ENCODE measurements at regions of chr9 and their contacts with region 1.

Region 1: DNA sequence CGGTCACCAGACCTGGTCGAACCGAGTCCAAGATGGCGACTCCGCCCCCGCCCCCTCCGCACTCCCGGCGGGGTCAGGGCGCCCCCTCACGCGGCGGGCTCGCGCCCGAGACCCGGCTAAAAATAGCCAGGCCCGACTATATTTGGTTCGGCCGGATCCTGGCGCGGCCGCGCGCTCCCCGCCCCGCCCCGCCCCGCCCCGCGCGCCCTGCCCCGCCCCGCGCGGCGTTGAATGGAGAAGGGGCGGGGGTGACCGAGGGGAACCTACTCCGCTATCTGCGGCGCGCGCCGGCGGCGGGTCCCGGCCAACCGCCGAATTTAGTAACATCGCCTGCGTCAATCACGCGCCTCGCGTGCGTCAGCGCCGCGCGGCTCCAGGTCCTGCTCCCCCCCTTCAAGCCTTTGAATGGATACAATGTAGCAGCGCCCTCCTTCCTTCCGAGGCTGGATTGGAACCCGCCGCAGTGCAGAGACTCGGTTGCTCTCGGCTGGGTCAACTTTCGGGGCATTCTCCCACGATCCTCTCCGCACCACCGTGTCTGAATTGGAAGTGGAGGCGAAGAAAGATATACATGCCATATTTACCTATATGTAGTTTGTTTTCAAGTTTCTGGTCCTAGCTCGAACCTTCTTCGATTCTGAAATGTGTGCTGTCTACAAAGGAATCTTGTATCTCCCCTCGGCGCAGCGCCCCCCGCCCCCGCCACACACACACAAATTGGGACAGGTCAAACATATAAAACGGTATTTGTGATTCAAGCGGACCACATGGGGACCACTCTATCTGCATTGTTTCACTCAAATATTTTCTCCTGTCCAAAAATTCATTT is 1.6 kb upstream of the NR4A3 start:
- DNase-seq: peak; percentile 48
- ATAC-seq: peak; percentile 49
- H3K4me3 ChIP-seq: peak overlapping the region; percentile 91
- H3K27ac ChIP-seq: peak overlapping the region; percentile 92
- H3K4me1 ChIP-seq: peaks cover 17% of the 10 kb centered on the region
- H3K27me3 ChIP-seq: peaks cover 0 to 4% of the 10 kb centered on the region in 2 experiments; a peak in 2 of 4 replicates
- CTCF ChIP-seq: peak in 1 of 3 experiments; percentile 30; a peak in 2 of 6 replicates
- EP300 ChIP-seq: peak; percentile 80; a peak in 3 of 4 replicates
- POLR2A ChIP-seq: no peak; the same call in none of the 2 replicates
- RAD21 ChIP-seq: no peak

Region 2: DNA sequence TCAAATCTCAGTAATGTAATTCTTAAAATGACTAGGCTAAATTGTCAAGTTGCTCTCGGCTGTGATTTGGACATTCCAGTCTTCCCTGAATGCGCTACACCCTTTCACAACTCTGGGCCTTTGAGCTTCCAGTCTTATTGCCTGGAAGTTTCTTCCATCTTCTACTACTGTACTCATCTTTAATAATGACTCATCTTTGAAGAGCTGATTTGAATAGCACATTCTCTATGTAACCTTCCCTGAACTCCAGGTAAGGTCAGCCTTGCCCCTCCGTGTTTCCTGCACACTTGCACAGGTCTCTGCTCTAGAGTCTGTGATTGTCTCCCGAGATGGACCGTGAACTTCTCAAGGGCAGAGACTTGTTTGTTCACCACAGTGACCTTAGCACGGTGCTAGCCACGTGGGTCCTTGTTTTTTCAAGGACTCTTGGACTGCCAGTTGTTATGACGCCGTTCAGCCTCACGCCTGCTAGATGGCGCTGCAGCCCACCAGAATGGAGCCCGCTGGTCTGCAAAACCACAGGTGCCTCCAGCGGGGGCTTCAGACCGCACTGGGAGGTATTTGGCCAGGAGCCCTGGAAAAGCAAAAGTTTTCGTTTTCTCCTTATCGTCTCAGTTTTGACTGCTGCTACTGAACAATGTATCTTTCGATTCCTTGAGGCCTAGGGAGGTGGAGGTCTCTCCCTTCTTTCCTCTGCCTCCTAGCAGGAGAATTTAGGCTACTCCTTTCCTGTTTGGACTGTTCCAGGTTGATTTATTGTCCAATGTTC is 553.6 kb before region 1 on chr9:
- CTCF ChIA-PET with region 1: interaction called, 4 read pairs
- POLR2A ChIA-PET with region 1: no interaction called
- RAD21 ChIA-PET with region 1: interaction called, 4 read pairs
- SMC1A ChIA-PET with region 1: interaction called, 11 read pairs
- in situ Hi-C with region 1: no loop called
- intact Hi-C with region 1: loop called (anchors 5 kb)
- DNase-seq: peak; percentile 48
- ATAC-seq: peak; percentile 82
- H3K4me3 ChIP-seq: no peak overlapping the region
- H3K27ac ChIP-seq: peak overlapping the region; percentile 57; the same call in 1 of the 2 replicates
- H3K4me1 ChIP-seq: peaks cover 40% of the 10 kb centered on the region
- H3K27me3 ChIP-seq: no peaks in the 10 kb centered on the region
- CTCF ChIP-seq: peak; percentile 90 to 97 (median 93); a peak in 5 of 6 replicates
- EP300 ChIP-seq: no peak
- POLR2A ChIP-seq: no peak
- RAD21 ChIP-seq: peak; percentile 92

Region 3: DNA sequence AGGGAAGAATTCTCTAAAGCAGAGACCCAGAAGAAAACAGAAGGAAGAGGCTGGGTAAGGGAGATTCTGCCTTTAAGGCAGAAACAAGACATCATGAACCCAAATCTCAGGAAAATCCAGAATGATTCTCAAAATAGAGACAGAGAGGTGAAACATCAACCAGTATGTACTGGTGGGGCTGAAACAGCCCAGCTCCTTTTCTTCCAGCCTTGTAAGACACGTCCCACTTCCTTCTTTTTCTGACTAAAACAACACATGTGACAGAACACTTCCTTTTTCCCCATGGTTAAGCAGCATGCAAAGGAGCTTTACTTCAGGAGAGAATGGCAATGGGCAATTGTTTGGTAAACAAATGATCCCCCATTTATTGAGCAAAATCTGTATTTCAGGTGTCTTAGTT is 229.2 kb before region 1 on chr9:
- CTCF ChIA-PET with region 1: no interaction called
- POLR2A ChIA-PET with region 1: no interaction called
- RAD21 ChIA-PET with region 1: no interaction called
- SMC1A ChIA-PET with region 1: no interaction called
- in situ Hi-C with region 1: no loop called
- intact Hi-C with region 1: loop called (anchors 5 kb)
- DNase-seq: no peak
- ATAC-seq: peak; percentile 22
- H3K4me3 ChIP-seq: no peak overlapping the region
- H3K27ac ChIP-seq: no peak overlapping the region
- H3K4me1 ChIP-seq: peaks cover 13% of the 10 kb centered on the region; the same call in 1 of the 2 replicates
- H3K27me3 ChIP-seq: no peaks in the 10 kb centered on the region
- CTCF ChIP-seq: no peak
- EP300 ChIP-seq: peak in 1 of 2 experiments; percentile 25; a peak in 1 of 4 replicates
- POLR2A ChIP-seq: no peak
- RAD21 ChIP-seq: no peak

Region 4: DNA sequence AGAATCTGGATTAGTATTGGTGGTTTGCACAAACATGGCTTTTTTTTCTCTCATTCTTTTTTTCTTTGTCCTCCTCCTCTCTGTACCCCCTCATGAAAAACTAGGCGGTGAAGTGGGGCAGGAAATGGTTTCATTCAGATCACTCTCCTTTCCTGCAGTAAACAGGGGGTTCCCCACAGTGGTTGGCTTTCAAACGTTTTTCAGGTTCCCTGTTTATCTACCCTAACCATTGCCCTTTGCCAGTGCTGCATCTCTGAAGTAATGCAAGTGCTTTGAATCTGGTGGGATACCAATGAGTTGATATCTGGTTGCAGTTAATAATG is 31.4 kb after region 1 on chr9:
- CTCF ChIA-PET with region 1: interaction called, 10 read pairs
- POLR2A ChIA-PET with region 1: interaction called, 4 read pairs
- RAD21 ChIA-PET with region 1: no interaction called
- SMC1A ChIA-PET with region 1: interaction called, 3 read pairs
- in situ Hi-C with region 1: no loop called
- intact Hi-C with region 1: no loop called
- DNase-seq: peak; percentile 59
- ATAC-seq: peak; percentile 95
- H3K4me3 ChIP-seq: no peak overlapping the region
- H3K27ac ChIP-seq: 0 out of 2 replicates have a peak overlapping the region, but pooled peaks have one; percentile 18
- H3K4me1 ChIP-seq: peaks cover 18% of the 10 kb centered on the region
- H3K27me3 ChIP-seq: no peaks in the 10 kb centered on the region
- CTCF ChIP-seq: no peak
- EP300 ChIP-seq: 0 out of 4 replicates have a peak, but pooled peaks of 1 of the 2 experiments have one; percentile 39
- POLR2A ChIP-seq: no peak
- RAD21 ChIP-seq: no peak

Region 5: DNA sequence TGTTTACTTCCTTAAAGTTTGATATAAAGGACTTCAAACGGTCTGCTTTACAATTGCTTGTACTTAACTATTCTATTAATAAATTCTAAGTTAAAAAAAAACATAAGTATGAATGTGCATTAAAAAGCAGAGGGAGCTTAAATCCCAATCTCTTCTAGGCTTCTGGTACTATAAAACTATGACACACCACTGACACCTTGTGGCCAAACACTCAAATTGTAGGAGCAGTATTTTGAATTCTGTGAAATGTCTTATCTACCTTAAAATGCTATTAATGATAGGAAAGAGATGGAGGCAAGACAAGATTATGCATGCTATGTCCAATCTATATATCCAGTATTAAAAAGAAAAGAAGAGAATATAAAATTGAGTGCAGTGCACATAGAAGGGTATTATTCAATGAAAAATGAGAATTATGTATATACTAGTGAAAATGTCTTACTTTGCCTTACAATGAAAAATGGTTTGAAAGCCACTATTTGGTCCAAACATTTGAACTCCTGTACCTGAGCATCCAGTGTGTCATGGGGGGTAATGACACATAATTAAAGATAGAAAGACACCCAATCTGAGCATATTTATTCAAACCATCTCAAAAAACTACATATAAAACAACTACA is 191.1 kb after region 1 on chr9:
- CTCF ChIA-PET with region 1: interaction called, 16 read pairs
- POLR2A ChIA-PET with region 1: no interaction called
- RAD21 ChIA-PET with region 1: interaction called, 18 read pairs
- SMC1A ChIA-PET with region 1: interaction called, 18 read pairs
- in situ Hi-C with region 1: loop called (anchors 25 kb)
- intact Hi-C with region 1: loop called (anchors 1 kb)
- DNase-seq: peak; percentile 38
- ATAC-seq: peak; percentile 73
- H3K4me3 ChIP-seq: no peak overlapping the region
- H3K27ac ChIP-seq: no peak overlapping the region
- H3K4me1 ChIP-seq: no peaks in the 10 kb centered on the region
- H3K27me3 ChIP-seq: no peaks in the 10 kb centered on the region
- CTCF ChIP-seq: peak; percentile 48 to 58 (median 56)
- EP300 ChIP-seq: no peak
- POLR2A ChIP-seq: no peak
- RAD21 ChIP-seq: peak; percentile 76

Region 6: DNA sequence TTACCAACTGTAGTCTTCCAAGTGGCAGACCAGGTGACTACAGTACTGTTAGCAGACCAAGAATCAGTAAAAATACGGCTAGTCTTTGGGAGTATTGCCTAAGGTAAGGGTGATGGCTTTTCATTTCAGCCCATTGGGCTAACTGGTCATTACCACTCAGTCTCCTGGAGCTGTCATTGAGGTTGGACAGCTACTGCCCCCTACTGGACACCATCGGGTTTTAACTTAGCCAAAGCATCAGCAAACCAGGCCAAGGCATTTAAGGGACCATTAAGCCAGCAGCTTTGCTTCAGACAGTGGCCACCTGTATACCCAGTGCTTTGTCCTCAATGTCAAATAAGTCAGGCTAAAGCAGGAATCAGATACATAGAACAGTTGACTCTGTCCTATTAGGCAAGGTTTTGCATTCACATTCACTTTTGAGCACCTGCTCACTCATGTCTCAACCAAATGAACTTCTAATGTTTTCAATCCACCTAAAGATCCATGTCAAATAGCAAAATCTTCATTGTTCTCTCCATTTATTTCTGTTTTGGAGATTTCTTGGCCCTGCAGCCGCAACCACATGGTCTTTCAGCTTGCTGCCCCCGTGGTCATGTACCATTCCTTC is 396.2 kb after region 1 on chr9:
- CTCF ChIA-PET with region 1: interaction called, 14 read pairs
- POLR2A ChIA-PET with region 1: no interaction called
- RAD21 ChIA-PET with region 1: interaction called, 5 read pairs
- SMC1A ChIA-PET with region 1: interaction called, 5 read pairs
- in situ Hi-C with region 1: loop called (anchors 25 kb)
- intact Hi-C with region 1: loop called (anchors 5 kb)
- DNase-seq: peak; percentile 40
- ATAC-seq: peak; percentile 96
- H3K4me3 ChIP-seq: no peak overlapping the region
- H3K27ac ChIP-seq: no peak overlapping the region
- H3K4me1 ChIP-seq: peaks cover 17% of the 10 kb centered on the region
- H3K27me3 ChIP-seq: no peaks in the 10 kb centered on the region
- CTCF ChIP-seq: peak; percentile 75 to 79 (median 77)
- EP300 ChIP-seq: no peak
- POLR2A ChIP-seq: no peak
- RAD21 ChIP-seq: peak; percentile 88

Region 7: DNA sequence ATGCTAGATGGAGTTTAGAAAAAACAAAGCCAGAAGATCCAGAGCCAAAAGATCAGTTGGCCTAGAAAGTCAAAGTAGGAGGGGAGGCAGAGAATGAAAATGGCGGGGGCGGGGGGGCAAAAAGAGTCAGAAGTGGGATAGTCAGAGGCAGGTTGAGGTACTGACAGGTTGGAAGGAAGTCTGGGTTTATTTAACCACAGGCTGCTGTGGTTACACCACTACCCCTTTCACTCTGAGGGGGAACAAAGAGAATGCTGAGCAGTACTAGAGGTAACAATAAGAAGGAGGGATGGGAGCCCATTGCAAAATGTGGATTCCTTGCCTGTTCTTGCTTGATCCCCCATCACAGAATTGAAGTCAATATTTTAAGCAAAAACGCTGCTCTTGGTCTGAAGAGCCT is 869.6 kb after region 1 on chr9:
- CTCF ChIA-PET with region 1: no interaction called
- POLR2A ChIA-PET with region 1: no interaction called
- RAD21 ChIA-PET with region 1: no interaction called
- SMC1A ChIA-PET with region 1: no interaction called
- in situ Hi-C with region 1: no loop called
- intact Hi-C with region 1: no loop called
- DNase-seq: no peak
- ATAC-seq: peak; percentile 65
- H3K4me3 ChIP-seq: no peak overlapping the region
- H3K27ac ChIP-seq: no peak overlapping the region
- H3K4me1 ChIP-seq: no peaks in the 10 kb centered on the region
- H3K27me3 ChIP-seq: no peaks in the 10 kb centered on the region
- CTCF ChIP-seq: no peak
- EP300 ChIP-seq: no peak
- POLR2A ChIP-seq: no peak
- RAD21 ChIP-seq: no peak